ENCODE measurements at regions of chr22 and their contacts with region 1.

Region 1: GRCh38 chr22:17171313-17172171 is 12.5 kb upstream of the HDHD5 start:
- DNase-seq: peak; percentile 73
- H3K4me3 Mint-ChIP-seq: peak overlapping the region; percentile 88
- H3K27ac Mint-ChIP-seq: peak overlapping the region; percentile 78
- H3K4me1 Mint-ChIP-seq: peaks cover 5% of the 10 kb centered on the region
- H3K27me3 Mint-ChIP-seq: peaks cover 9% of the 10 kb centered on the region

Region 2: GRCh38 chr22:17074648-17075002 is 96.9 kb before region 1 on chr22:
- intact Hi-C with region 1: loop called (anchors 1 kb)
- DNase-seq: no peak
- H3K4me3 Mint-ChIP-seq: no peak overlapping the region
- H3K27ac Mint-ChIP-seq: no peak overlapping the region
- H3K4me1 Mint-ChIP-seq: peaks cover 21% of the 10 kb centered on the region
- H3K27me3 Mint-ChIP-seq: peaks cover 36% of the 10 kb centered on the region

Region 3: GRCh38 chr22:17158568-17159503 is 12.7 kb before region 1 on chr22 and contains the start of gene HDHD5:
- intact Hi-C with region 1: loop called (anchors 1 kb)
- DNase-seq: peak; percentile 78
- H3K4me3 Mint-ChIP-seq: peak within 1 kb of the TSS; percentile 88
- H3K27ac Mint-ChIP-seq: peak within 1 kb of the TSS; percentile 75
- H3K4me1 Mint-ChIP-seq: peaks cover 25% of the 10 kb centered on the region
- H3K27me3 Mint-ChIP-seq: no peaks in the 10 kb centered on the region
- total RNA-seq, gene HDHD5: 39.1 and 42.1 TPM in 2 replicates

Region 4: GRCh38 chr22:17199003-17199731 is 27.6 kb after region 1 on chr22:
- intact Hi-C with region 1: no loop called
- DNase-seq: no peak
- H3K4me3 Mint-ChIP-seq: no peak overlapping the region
- H3K27ac Mint-ChIP-seq: no peak overlapping the region
- H3K4me1 Mint-ChIP-seq: no peaks in the 10 kb centered on the region
- H3K27me3 Mint-ChIP-seq: no peaks in the 10 kb centered on the region

Region 5: GRCh38 chr22:17501679-17502285 is 330.2 kb after region 1 on chr22:
- intact Hi-C with region 1: loop called (anchors 1 kb)
- DNase-seq: peak; percentile 23
- H3K4me3 Mint-ChIP-seq: no peak overlapping the region
- H3K27ac Mint-ChIP-seq: no peak overlapping the region
- H3K4me1 Mint-ChIP-seq: peaks cover 4% of the 10 kb centered on the region
- H3K27me3 Mint-ChIP-seq: peaks cover 3% of the 10 kb centered on the region

Region 6: GRCh38 chr22:17628304-17629166 is 457.0 kb after region 1 on chr22 and contains the start of gene ATP6V1E1:
- intact Hi-C with region 1: loop called (anchors 2 kb)
- DNase-seq: peak; percentile 95
- H3K4me3 Mint-ChIP-seq: peak within 1 kb of the TSS; percentile 94
- H3K27ac Mint-ChIP-seq: peak within 1 kb of the TSS; percentile 85
- H3K4me1 Mint-ChIP-seq: peaks cover 21% of the 10 kb centered on the region
- H3K27me3 Mint-ChIP-seq: peaks cover 5% of the 10 kb centered on the region
- total RNA-seq, gene ATP6V1E1: 120 and 128 TPM in 2 replicates

Measured in activated T-helper 1 cell treated with anti-CD3 and anti-CD28 coated beads, Interleukin-12 subunit alpha, Interleukin-12 subunit beta, Interleukin-2, Interleukin-4 antibody, amounts not matched to agents 30 ng/mL and 10 ng/mL and 1 ng/mL, durations not matched to agents 14 hours and 24 hours and 36 hours (primary cell).